ENCODE measurements at regions of chr17 and their contacts with region 1.

Region 1: DNA sequence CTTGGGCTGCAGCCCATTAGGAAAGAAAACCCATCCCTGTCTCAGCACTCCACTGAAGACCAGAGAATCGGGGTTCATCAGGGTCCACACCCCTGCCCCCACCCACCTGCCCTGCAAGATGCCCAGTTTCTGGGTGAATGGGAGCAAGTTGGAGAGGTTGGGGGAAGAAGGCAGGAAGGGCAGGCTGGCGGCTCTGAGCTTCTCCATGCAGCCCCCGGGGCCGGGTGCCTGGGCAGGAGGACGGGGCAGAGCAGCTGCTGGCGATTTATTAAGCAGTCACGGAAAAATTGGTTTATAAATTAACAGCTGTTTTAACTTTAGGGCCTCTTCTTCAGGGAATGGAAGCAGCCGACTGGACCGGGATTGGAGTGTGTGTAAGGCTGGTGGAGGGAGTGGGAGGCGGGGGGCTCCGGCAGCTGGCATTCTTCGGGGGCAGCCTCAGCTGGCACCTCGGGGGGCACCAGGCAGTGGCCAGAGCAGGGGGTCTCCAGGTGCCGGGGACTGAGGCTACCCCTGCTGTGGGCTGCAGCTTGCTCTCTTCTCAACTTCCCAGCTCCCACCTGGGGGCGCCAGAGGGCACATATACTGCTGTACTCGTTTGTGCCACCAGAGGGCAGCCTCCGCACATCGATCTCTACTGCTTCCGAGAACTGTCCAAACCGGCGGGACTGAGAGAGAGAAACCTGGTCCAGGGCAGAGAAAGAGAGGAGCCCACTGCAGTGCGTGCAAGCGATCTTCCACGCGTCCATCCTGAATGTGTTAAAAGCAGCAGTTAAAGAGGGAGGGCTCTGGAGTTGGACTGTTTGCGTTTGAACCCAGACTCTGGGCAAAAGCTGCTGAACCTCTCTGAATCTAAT is 5.0 kb upstream of the PPP1R1B start:
- DNase-seq: peak; percentile 82 to 92
- H3K4me3 ChIP-seq: no peak overlapping the region
- H3K4me3 Mint-ChIP-seq: no peak overlapping the region
- H3K27ac Mint-ChIP-seq: no peak overlapping the region
- H3K4me1 ChIP-seq: peaks cover 14% of the 10 kb centered on the region; the same call in 1 of the 2 replicates
- H3K4me1 Mint-ChIP-seq: no peaks in the 10 kb centered on the region
- H3K27me3 ChIP-seq: 0 out of 2 replicates have a peak, but pooled peaks cover 4% of the 10 kb centered on the region
- H3K27me3 Mint-ChIP-seq: peaks cover 12% of the 10 kb centered on the region
- CTCF ChIP-seq: peak; percentile 100

Region 2: GRCh38 chr17:39393736-39394135 is 228.0 kb before region 1 on chr17:
- CTCF ChIA-PET with region 1: no interaction called
- POLR2A ChIA-PET with region 1: no interaction called
- intact Hi-C with region 1: no loop called
- DNase-seq: no peak
- H3K4me3 ChIP-seq: no peak overlapping the region
- H3K4me3 Mint-ChIP-seq: no peak overlapping the region
- H3K27ac Mint-ChIP-seq: no peak overlapping the region
- H3K4me1 ChIP-seq: no peaks in the 10 kb centered on the region
- H3K4me1 Mint-ChIP-seq: no peaks in the 10 kb centered on the region
- H3K27me3 ChIP-seq: no peaks in the 10 kb centered on the region
- H3K27me3 Mint-ChIP-seq: no peaks in the 10 kb centered on the region
- CTCF ChIP-seq: no peak

Region 3: GRCh38 chr17:39547713-39548478 is 73.9 kb before region 1 on chr17:
- CTCF ChIA-PET with region 1: interaction called, 48 read pairs
- POLR2A ChIA-PET with region 1: no interaction called
- intact Hi-C with region 1: loop called (anchors 1 kb)
- DNase-seq: peak; percentile 57 to 77
- H3K4me3 ChIP-seq: no peak overlapping the region
- H3K4me3 Mint-ChIP-seq: no peak overlapping the region
- H3K27ac Mint-ChIP-seq: no peak overlapping the region
- H3K4me1 ChIP-seq: no peaks in the 10 kb centered on the region
- H3K4me1 Mint-ChIP-seq: no peaks in the 10 kb centered on the region
- H3K27me3 ChIP-seq: no peaks in the 10 kb centered on the region
- H3K27me3 Mint-ChIP-seq: no peaks in the 10 kb centered on the region
- CTCF ChIP-seq: peak; percentile 90 to 98

Region 4: GRCh38 chr17:39605492-39606433 is 16.0 kb before region 1 on chr17:
- CTCF ChIA-PET with region 1: interaction called, 14 read pairs
- POLR2A ChIA-PET with region 1: interaction called, 3 read pairs
- intact Hi-C with region 1: no loop called
- DNase-seq: no peak
- H3K4me3 ChIP-seq: no peak overlapping the region
- H3K4me3 Mint-ChIP-seq: peak overlapping the region; percentile 31
- H3K27ac Mint-ChIP-seq: no peak overlapping the region
- H3K4me1 ChIP-seq: peaks cover 14% of the 10 kb centered on the region; the same call in 1 of the 2 replicates
- H3K4me1 Mint-ChIP-seq: no peaks in the 10 kb centered on the region
- H3K27me3 ChIP-seq: peaks cover 5% of the 10 kb centered on the region
- H3K27me3 Mint-ChIP-seq: peaks cover 43% of the 10 kb centered on the region
- CTCF ChIP-seq: no peak

Region 5: GRCh38 chr17:39653662-39654331 is 32.0 kb after region 1 on chr17:
- CTCF ChIA-PET with region 1: interaction called, 22 read pairs
- POLR2A ChIA-PET with region 1: no interaction called
- intact Hi-C with region 1: no loop called
- DNase-seq: peak in 1 of 2 experiments; percentile 69
- H3K4me3 ChIP-seq: no peak overlapping the region
- H3K4me3 Mint-ChIP-seq: no peak overlapping the region
- H3K27ac Mint-ChIP-seq: no peak overlapping the region
- H3K4me1 ChIP-seq: peaks cover 19% of the 10 kb centered on the region
- H3K4me1 Mint-ChIP-seq: peaks cover 18% of the 10 kb centered on the region
- H3K27me3 ChIP-seq: no peaks in the 10 kb centered on the region
- H3K27me3 Mint-ChIP-seq: no peaks in the 10 kb centered on the region
- CTCF ChIP-seq: peak; percentile 76 to 81

Region 6: DNA sequence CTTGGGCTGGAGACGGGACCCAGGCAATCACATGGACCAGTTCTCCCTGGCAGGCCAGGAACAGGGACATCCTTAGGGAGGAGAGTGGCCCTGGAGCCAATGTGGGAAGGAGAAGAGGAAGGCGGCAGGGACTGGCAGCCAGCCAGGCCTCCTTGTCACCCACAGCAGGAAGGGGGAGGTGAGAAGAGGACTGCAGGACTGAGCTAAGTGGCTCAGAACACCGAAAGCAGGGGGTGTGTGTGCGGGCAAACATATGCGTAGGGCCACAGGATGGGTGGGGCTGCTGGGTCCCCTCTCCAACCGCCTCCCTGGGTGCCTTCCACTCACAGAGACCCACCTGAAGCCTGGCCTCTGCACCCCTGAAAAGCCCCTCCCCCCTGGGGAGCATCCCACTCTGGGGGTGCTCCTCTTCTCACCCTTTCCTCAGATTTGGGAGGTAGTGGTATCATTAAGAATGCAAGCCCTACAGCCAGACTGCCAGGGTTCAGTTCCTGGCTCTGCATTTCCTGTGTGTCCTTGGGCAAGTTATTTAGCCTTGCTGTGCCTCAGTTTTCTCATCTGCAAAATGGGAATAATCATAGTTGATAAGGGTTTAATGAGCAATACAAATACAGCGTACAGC is 54.6 kb after region 1 on chr17:
- CTCF ChIA-PET with region 1: interaction called, 44 read pairs
- POLR2A ChIA-PET with region 1: no interaction called
- intact Hi-C with region 1: loop called (anchors 1 kb)
- DNase-seq: no peak
- H3K4me3 ChIP-seq: no peak overlapping the region
- H3K4me3 Mint-ChIP-seq: no peak overlapping the region
- H3K27ac Mint-ChIP-seq: no peak overlapping the region
- H3K4me1 ChIP-seq: peaks cover 31% of the 10 kb centered on the region
- H3K4me1 Mint-ChIP-seq: peaks cover 14% of the 10 kb centered on the region
- H3K27me3 ChIP-seq: no peaks in the 10 kb centered on the region
- H3K27me3 Mint-ChIP-seq: no peaks in the 10 kb centered on the region
- CTCF ChIP-seq: no peak

Region 7: GRCh38 chr17:39699818-39700147 is 78.0 kb after region 1 on chr17 and contains the start of gene ERBB2:
- CTCF ChIA-PET with region 1: interaction called, 16 read pairs
- POLR2A ChIA-PET with region 1: no interaction called
- intact Hi-C with region 1: no loop called
- DNase-seq: peak; percentile 79 to 87
- H3K4me3 ChIP-seq: peak within 1 kb of the TSS; percentile 84
- H3K4me3 Mint-ChIP-seq: peak within 1 kb of the TSS; percentile 99
- H3K27ac Mint-ChIP-seq: peak within 1 kb of the TSS; percentile 98
- H3K4me1 ChIP-seq: peaks cover 62% of the 10 kb centered on the region
- H3K4me1 Mint-ChIP-seq: peaks cover 42% of the 10 kb centered on the region
- H3K27me3 ChIP-seq: no peaks in the 10 kb centered on the region
- H3K27me3 Mint-ChIP-seq: no peaks in the 10 kb centered on the region
- CTCF ChIP-seq: no peak
- total RNA-seq, gene ERBB2: 121 and 124 TPM in 2 replicates

Region 8: GRCh38 chr17:39754161-39754951 is 132.6 kb after region 1 on chr17:
- CTCF ChIA-PET with region 1: interaction called, 14 read pairs
- POLR2A ChIA-PET with region 1: no interaction called
- intact Hi-C with region 1: loop called (anchors 1 kb)
- DNase-seq: peak; percentile 86 to 95
- H3K4me3 ChIP-seq: peak overlapping the region; percentile 85
- H3K4me3 Mint-ChIP-seq: peak overlapping the region; percentile 71
- H3K27ac Mint-ChIP-seq: peak overlapping the region; percentile 57
- H3K4me1 ChIP-seq: peaks cover 16% of the 10 kb centered on the region
- H3K4me1 Mint-ChIP-seq: peaks cover 8% of the 10 kb centered on the region
- H3K27me3 ChIP-seq: no peaks in the 10 kb centered on the region
- H3K27me3 Mint-ChIP-seq: peaks cover 4% of the 10 kb centered on the region
- CTCF ChIP-seq: peak; percentile 84 to 99

Measured in Caco-2 (cell line).